A549 (cell line): ENCODE measurements at regions of chr3 and their contacts with region 1.

Region 1: GRCh38 chr3:179630753-179631451 is 21.9 kb upstream of the USP13 start:
- DNase-seq: no peak
- ATAC-seq: no peak
- H3K4me3 ChIP-seq: no peak overlapping the region
- H3K27ac ChIP-seq: no peak overlapping the region
- H3K4me1 ChIP-seq: no peaks in the 10 kb centered on the region
- CTCF ChIP-seq: no peak
- EP300 ChIP-seq: no peak
- POLR2A ChIP-seq: no peak
- RAD21 ChIP-seq: no peak

Region 2: DNA sequence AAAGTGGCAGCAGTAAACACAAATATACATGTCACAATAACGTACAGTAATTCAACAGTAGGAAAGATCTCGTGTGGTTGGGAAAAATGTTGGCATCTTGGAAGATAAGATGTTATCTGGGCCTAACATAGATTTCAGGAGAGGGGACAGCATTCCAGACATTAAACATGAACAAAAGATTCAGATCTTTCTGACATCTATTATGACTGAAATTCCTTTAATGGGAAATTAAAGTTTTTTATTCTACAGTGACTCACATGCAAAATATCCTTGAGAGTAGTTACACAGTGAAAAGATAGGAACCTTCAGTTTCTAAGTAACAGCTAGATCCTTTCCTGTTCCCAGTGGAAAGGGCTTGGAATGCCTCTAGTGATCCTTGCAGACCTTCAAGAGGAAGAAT is 17.1 kb before region 1 on chr3:
- CTCF ChIA-PET with region 1: no interaction called
- POLR2A ChIA-PET with region 1: no interaction called
- DNase-seq: no peak
- ATAC-seq: no peak
- H3K4me3 ChIP-seq: no peak overlapping the region
- H3K27ac ChIP-seq: no peak overlapping the region
- H3K4me1 ChIP-seq: peaks cover 10% of the 10 kb centered on the region; the same call in 1 of the 3 replicates
- CTCF ChIP-seq: no peak
- EP300 ChIP-seq: no peak
- POLR2A ChIP-seq: no peak
- RAD21 ChIP-seq: no peak

Region 3: GRCh38 chr3:179653096-179653797 is 22.3 kb after region 1 on chr3:
- CTCF ChIA-PET with region 1: interaction called, 20 read pairs
- POLR2A ChIA-PET with region 1: interaction called, 6 read pairs
- DNase-seq: peak; percentile 24 to 69
- ATAC-seq: peak; percentile 75 to 84
- H3K4me3 ChIP-seq: peak overlapping the region; percentile 81
- H3K27ac ChIP-seq: peak overlapping the region; percentile 93 to 99
- H3K4me1 ChIP-seq: peaks cover 12% of the 10 kb centered on the region; the same call in 2 of the 3 replicates
- CTCF ChIP-seq: 0 out of 3 replicates have a peak, but pooled peaks have one; percentile 1
- EP300 ChIP-seq: no peak
- POLR2A ChIP-seq: no peak; the same call in 1 of the 2 replicates
- RAD21 ChIP-seq: peak in 1 of 2 experiments; percentile 27; a peak in 1 of 5 replicates

Region 4: DNA sequence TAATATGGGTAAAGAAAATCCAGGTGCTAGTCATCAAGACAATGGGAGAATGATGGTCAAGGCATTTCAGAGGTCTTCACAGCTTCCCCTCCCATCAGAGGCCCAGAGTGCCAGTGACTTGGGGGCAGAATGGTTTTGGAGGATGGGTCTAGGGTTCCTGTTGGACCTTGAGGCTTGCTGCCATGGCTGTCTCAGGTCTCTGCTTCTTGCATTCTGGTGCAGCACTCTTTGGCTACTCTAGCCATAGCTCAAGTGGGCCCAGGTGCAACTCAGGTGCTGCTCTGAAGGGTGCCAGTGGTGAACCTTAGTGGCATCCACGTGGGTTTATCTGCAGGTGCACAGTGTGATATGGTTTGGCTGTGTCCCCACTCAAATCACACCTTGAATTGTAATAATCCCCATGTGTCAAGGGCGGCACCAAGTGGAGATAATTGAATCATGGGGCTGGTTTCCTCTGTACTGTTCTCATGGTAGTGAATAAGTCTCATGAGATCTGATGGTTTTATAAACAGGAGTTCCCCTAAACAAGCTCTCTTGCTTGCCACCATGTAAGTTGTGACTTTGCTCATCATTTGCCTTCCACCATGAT is 454.3 kb after region 1 on chr3:
- CTCF ChIA-PET with region 1: no interaction called
- POLR2A ChIA-PET with region 1: no interaction called
- DNase-seq: peak in 1 of 2 experiments; percentile 3
- ATAC-seq: no peak
- H3K4me3 ChIP-seq: no peak overlapping the region
- H3K27ac ChIP-seq: no peak overlapping the region
- H3K4me1 ChIP-seq: no peaks in the 10 kb centered on the region
- CTCF ChIP-seq: no peak
- EP300 ChIP-seq: no peak
- POLR2A ChIP-seq: no peak
- RAD21 ChIP-seq: peak in 1 of 2 experiments; percentile 32; a peak in 1 of 5 replicates